ENCODE measurements at regions of chr9 and their contacts with region 1.

Region 1: GRCh38 chr9:134378901-134379338 is 52.7 kb downstream of the RXRA start:
- DNase-seq: peak; percentile 51 to 68
- ATAC-seq: peak; percentile 7 to 54 (median 31)
- H3K4me3 ChIP-seq: peak overlapping the region in 1 of 10 donors; percentile 8
- H3K27ac ChIP-seq: peak overlapping the region; percentile 0 to 98 (median 86)
- H3K4me1 ChIP-seq: peaks cover 77 to 100% (median 100%) of the 10 kb centered on the region in 9 donors
- H3K27me3 ChIP-seq: no peaks in the 10 kb centered on the region
- CTCF ChIP-seq: no peak

Region 2: DNA sequence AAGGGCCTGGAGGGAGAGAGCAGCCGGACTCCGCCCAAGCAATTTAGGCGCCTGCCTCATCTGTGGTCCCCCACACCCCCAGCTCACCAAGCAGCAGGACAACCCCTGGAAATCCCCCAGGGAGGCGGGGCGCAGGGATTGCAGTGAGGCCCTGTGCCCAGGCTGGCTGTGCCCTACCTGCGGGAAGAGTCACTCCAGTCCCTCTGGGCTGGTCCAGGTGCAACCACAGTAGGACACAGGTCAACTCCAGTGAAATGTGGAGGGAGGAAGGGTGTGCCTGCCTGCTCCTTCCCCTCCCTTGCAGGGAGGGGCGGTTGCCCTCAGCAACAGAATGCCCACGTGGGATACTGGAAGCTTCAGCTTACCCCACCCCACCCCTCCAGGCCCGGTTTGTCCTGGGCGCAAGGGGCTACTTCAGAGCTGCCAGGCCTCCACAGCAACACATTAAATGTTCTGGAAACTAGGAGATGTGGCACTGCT is 1126.6 kb before region 1 on chr9:
- intact Hi-C with region 1: no loop called
- DNase-seq: no peak
- ATAC-seq: peak; percentile 34 to 82 (median 70)
- H3K4me3 ChIP-seq: peak overlapping the region in 6 of 10 donors; percentile 14 to 36 (median 21)
- H3K27ac ChIP-seq: peak overlapping the region in 6 of 10 donors; percentile 55 to 65 (median 63)
- H3K4me1 ChIP-seq: peaks cover 5 to 40% (median 20%) of the 10 kb centered on the region in 9 donors
- H3K27me3 ChIP-seq: peaks cover 0 to 4% (median 0%) of the 10 kb centered on the region in 7 donors
- CTCF ChIP-seq: no peak

Region 3: GRCh38 chr9:134301387-134302129 is 77.4 kb before region 1 on chr9:
- intact Hi-C with region 1: no loop called
- DNase-seq: peak in 1 of 2 donors; percentile 4
- ATAC-seq: no peak
- H3K4me3 ChIP-seq: no peak overlapping the region
- H3K27ac ChIP-seq: no peak overlapping the region
- H3K4me1 ChIP-seq: peaks cover 0 to 4% (median 0%) of the 10 kb centered on the region in 9 donors
- H3K27me3 ChIP-seq: no peaks in the 10 kb centered on the region
- CTCF ChIP-seq: no peak

Region 4: GRCh38 chr9:134344068-134344799 is 34.7 kb before region 1 on chr9:
- intact Hi-C with region 1: loop called in 2 of 10 experiments (anchors 2 to 5 kb)
- DNase-seq: peak; percentile 57 to 66
- ATAC-seq: peak in 5 of 8 donors; percentile 3 to 9 (median 4)
- H3K4me3 ChIP-seq: peak overlapping the region in 1 of 10 donors; percentile 6
- H3K27ac ChIP-seq: peak overlapping the region; percentile 17 to 91 (median 70)
- H3K4me1 ChIP-seq: peaks cover 81 to 100% (median 98%) of the 10 kb centered on the region in 9 donors
- H3K27me3 ChIP-seq: no peaks in the 10 kb centered on the region
- CTCF ChIP-seq: peak in 4 of 9 donors; percentile 7 to 28 (median 21)

Region 5: DNA sequence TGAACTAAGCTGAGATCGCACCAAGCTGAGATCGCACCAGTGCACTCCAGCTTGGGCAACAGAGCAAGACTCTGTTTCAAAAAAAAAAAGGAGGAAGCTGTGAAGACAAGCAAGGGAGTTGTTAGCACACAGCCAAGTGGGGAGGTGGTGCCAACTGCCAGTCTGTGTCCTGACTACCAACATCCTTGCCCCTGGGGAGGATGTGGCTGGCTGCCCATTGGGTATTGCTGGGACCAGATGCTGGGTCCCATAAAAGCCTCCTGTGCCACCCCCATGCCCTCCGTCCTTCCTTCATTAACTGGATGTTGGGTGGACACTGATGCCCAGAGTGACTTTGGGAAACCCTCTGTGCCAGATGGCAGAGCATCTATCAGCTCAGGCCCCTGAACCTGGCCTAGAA is 105.6 kb after region 1 on chr9:
- intact Hi-C with region 1: no loop called
- DNase-seq: no peak
- ATAC-seq: no peak
- H3K4me3 ChIP-seq: no peak overlapping the region
- H3K27ac ChIP-seq: no peak overlapping the region
- H3K4me1 ChIP-seq: peaks cover 0 to 7% (median 0%) of the 10 kb centered on the region in 9 donors
- H3K27me3 ChIP-seq: peaks cover 0 to 10% (median 0%) of the 10 kb centered on the region in 7 donors
- CTCF ChIP-seq: no peak